Posterior vena cava (tissue), 2 donors: ENCODE measurements at regions of chr7 and their contacts with region 1.

Region 1: GRCh38 chr7:52135403-52135802 is 818.8 kb upstream of the COBL start:
- DNase-seq: no peak

Region 2: GRCh38 chr7:52154382-52154781 is 19.0 kb after region 1 on chr7:
- intact Hi-C with region 1: loop called in 1 of 2 experiments (anchors 2 kb)
- DNase-seq: no peak

Region 3: GRCh38 chr7:52719676-52720075 is 584.3 kb after region 1 on chr7:
- intact Hi-C with region 1: no loop called
- DNase-seq: no peak